ENCODE measurements at regions of chr5 and their contacts with region 1.

Region 1: GRCh38 chr5:16666883-16667398 is 50.1 kb upstream of the RETREG1 start:
- DNase-seq: peak in 6 of 9 experiments; percentile 19 to 66 (median 40)
- ATAC-seq: no peak
- H3K4me3 ChIP-seq: no peak overlapping the region
- H3K4me3 Mint-ChIP-seq: no peak overlapping the region
- H3K27ac ChIP-seq: no peak overlapping the region
- H3K27ac Mint-ChIP-seq: no peak overlapping the region
- H3K4me1 ChIP-seq: no peaks in the 10 kb centered on the region
- H3K4me1 Mint-ChIP-seq: peaks cover 18% of the 10 kb centered on the region
- H3K27me3 ChIP-seq: no peaks in the 10 kb centered on the region
- H3K27me3 Mint-ChIP-seq: no peaks in the 10 kb centered on the region
- CTCF ChIP-seq: peak; percentile 59

Region 2: GRCh38 chr5:16160706-16161105 is 506.2 kb before region 1 on chr5:
- CTCF ChIA-PET with region 1: interaction called, 11 read pairs
- POLR2A ChIA-PET with region 1: no interaction called
- intact Hi-C with region 1: loop called in 1 of 2 experiments (anchors 10 kb)
- DNase-seq: peak in 2 of 9 experiments; percentile 16 to 36
- ATAC-seq: no peak
- H3K4me3 ChIP-seq: no peak overlapping the region
- H3K4me3 Mint-ChIP-seq: no peak overlapping the region
- H3K27ac ChIP-seq: no peak overlapping the region
- H3K27ac Mint-ChIP-seq: no peak overlapping the region
- H3K4me1 ChIP-seq: no peaks in the 10 kb centered on the region
- H3K4me1 Mint-ChIP-seq: no peaks in the 10 kb centered on the region
- H3K27me3 ChIP-seq: no peaks in the 10 kb centered on the region
- H3K27me3 Mint-ChIP-seq: peaks cover 2% of the 10 kb centered on the region
- CTCF ChIP-seq: peak; percentile 39

Region 3: GRCh38 chr5:16465544-16466466 is 201.1 kb before region 1 on chr5 and contains the start of gene ZNF622:
- CTCF ChIA-PET with region 1: interaction called, 3 read pairs
- POLR2A ChIA-PET with region 1: no interaction called
- intact Hi-C with region 1: loop called in 1 of 2 experiments (anchors 2 kb)
- DNase-seq: peak; percentile 75 to 95 (median 89)
- ATAC-seq: peak; percentile 91
- H3K4me3 ChIP-seq: peak within 1 kb of the TSS; percentile 80 to 81
- H3K4me3 Mint-ChIP-seq: peak within 1 kb of the TSS; percentile 96
- H3K27ac ChIP-seq: peak within 1 kb of the TSS; percentile 76 to 90
- H3K27ac Mint-ChIP-seq: peak within 1 kb of the TSS; percentile 95
- H3K4me1 ChIP-seq: peaks cover 58% of the 10 kb centered on the region
- H3K4me1 Mint-ChIP-seq: peaks cover 87% of the 10 kb centered on the region
- H3K27me3 ChIP-seq: no peaks in the 10 kb centered on the region
- H3K27me3 Mint-ChIP-seq: no peaks in the 10 kb centered on the region
- CTCF ChIP-seq: no peak
- total RNA-seq, gene ZNF622: 64.8 to 66.1 TPM

Region 4: DNA sequence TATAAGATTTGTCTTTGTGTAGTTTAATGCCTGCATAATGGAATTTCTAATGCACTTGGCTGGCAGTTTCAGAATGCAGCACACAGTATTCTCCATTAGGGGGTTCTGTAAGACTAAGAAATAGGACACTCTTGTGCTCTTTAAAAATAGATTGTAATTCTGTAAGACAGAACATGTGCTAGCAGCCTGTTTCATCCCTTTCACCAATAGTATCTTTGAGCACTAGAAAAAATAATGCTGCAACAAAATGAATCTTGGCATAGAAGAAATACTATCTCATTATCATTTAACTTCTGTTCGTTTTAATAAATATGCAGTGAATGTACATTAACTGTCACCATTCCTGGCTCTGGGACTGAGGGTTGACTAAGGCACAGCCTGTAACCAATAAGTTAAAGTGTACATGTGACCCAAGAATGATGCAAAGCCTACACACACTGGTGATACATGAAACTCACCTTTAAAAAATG is 177.6 kb before region 1 on chr5:
- CTCF ChIA-PET with region 1: interaction called, 44 read pairs
- POLR2A ChIA-PET with region 1: no interaction called
- intact Hi-C with region 1: loop called in 1 of 2 experiments (anchors 1 kb)
- DNase-seq: peak in 3 of 9 experiments; percentile 11 to 38 (median 25)
- ATAC-seq: peak; percentile 84
- H3K4me3 ChIP-seq: no peak overlapping the region
- H3K4me3 Mint-ChIP-seq: no peak overlapping the region
- H3K27ac ChIP-seq: no peak overlapping the region
- H3K27ac Mint-ChIP-seq: no peak overlapping the region
- H3K4me1 ChIP-seq: no peaks in the 10 kb centered on the region
- H3K4me1 Mint-ChIP-seq: peaks cover 52% of the 10 kb centered on the region
- H3K27me3 ChIP-seq: no peaks in the 10 kb centered on the region
- H3K27me3 Mint-ChIP-seq: no peaks in the 10 kb centered on the region
- CTCF ChIP-seq: peak; percentile 67

Region 5: GRCh38 chr5:16552666-16553343 is 114.1 kb before region 1 on chr5:
- CTCF ChIA-PET with region 1: interaction called, 18 read pairs
- POLR2A ChIA-PET with region 1: interaction called, 3 read pairs
- intact Hi-C with region 1: loop called in 1 of 2 experiments (anchors 1 kb)
- DNase-seq: peak in 8 of 9 experiments; percentile 11 to 63 (median 49)
- ATAC-seq: peak; percentile 86
- H3K4me3 ChIP-seq: no peak overlapping the region
- H3K4me3 Mint-ChIP-seq: no peak overlapping the region
- H3K27ac ChIP-seq: no peak overlapping the region
- H3K27ac Mint-ChIP-seq: no peak overlapping the region
- H3K4me1 ChIP-seq: no peaks in the 10 kb centered on the region
- H3K4me1 Mint-ChIP-seq: peaks cover 54% of the 10 kb centered on the region
- H3K27me3 ChIP-seq: no peaks in the 10 kb centered on the region
- H3K27me3 Mint-ChIP-seq: no peaks in the 10 kb centered on the region
- CTCF ChIP-seq: peak; percentile 73

Region 6: GRCh38 chr5:16596581-16596940 is 70.4 kb before region 1 on chr5:
- CTCF ChIA-PET with region 1: interaction called, 3 read pairs
- POLR2A ChIA-PET with region 1: no interaction called
- intact Hi-C with region 1: loop called in 1 of 2 experiments (anchors 5 kb)
- DNase-seq: no peak
- ATAC-seq: no peak
- H3K4me3 ChIP-seq: no peak overlapping the region
- H3K4me3 Mint-ChIP-seq: no peak overlapping the region
- H3K27ac ChIP-seq: no peak overlapping the region
- H3K27ac Mint-ChIP-seq: peak overlapping the region; percentile 47
- H3K4me1 ChIP-seq: peaks cover 29% of the 10 kb centered on the region
- H3K4me1 Mint-ChIP-seq: peaks cover 86% of the 10 kb centered on the region
- H3K27me3 ChIP-seq: no peaks in the 10 kb centered on the region
- H3K27me3 Mint-ChIP-seq: no peaks in the 10 kb centered on the region
- CTCF ChIP-seq: no peak

Region 7: GRCh38 chr5:16626663-16627264 is 40.2 kb before region 1 on chr5:
- CTCF ChIA-PET with region 1: interaction called, 47 read pairs
- POLR2A ChIA-PET with region 1: interaction called, 5 read pairs
- intact Hi-C with region 1: no loop called
- DNase-seq: peak in 3 of 9 experiments; percentile 13 to 61 (median 20)
- ATAC-seq: peak; percentile 30
- H3K4me3 ChIP-seq: no peak overlapping the region
- H3K4me3 Mint-ChIP-seq: peak overlapping the region; percentile 20
- H3K27ac ChIP-seq: no peak overlapping the region
- H3K27ac Mint-ChIP-seq: peak overlapping the region; percentile 82
- H3K4me1 ChIP-seq: peaks cover 55% of the 10 kb centered on the region
- H3K4me1 Mint-ChIP-seq: peaks cover 70% of the 10 kb centered on the region
- H3K27me3 ChIP-seq: no peaks in the 10 kb centered on the region
- H3K27me3 Mint-ChIP-seq: no peaks in the 10 kb centered on the region
- CTCF ChIP-seq: no peak